Activated CD4-positive, alpha-beta T cell treated with anti-CD3 and anti-CD28 coated beads for 36 hours (primary cell): ENCODE measurements at regions of chr9 and their contacts with region 1.

Region 1: GRCh38 chr9:136109351-136110081 is 9.2 kb downstream of the TMEM250 start:
- DNase-seq: peak; percentile 97
- ATAC-seq: peak; percentile 88
- H3K4me3 Mint-ChIP-seq: peak overlapping the region; percentile 78
- H3K27ac Mint-ChIP-seq: peak overlapping the region; percentile 97
- H3K4me1 Mint-ChIP-seq: peaks cover 71% of the 10 kb centered on the region
- H3K27me3 Mint-ChIP-seq: no peaks in the 10 kb centered on the region

Region 2: DNA sequence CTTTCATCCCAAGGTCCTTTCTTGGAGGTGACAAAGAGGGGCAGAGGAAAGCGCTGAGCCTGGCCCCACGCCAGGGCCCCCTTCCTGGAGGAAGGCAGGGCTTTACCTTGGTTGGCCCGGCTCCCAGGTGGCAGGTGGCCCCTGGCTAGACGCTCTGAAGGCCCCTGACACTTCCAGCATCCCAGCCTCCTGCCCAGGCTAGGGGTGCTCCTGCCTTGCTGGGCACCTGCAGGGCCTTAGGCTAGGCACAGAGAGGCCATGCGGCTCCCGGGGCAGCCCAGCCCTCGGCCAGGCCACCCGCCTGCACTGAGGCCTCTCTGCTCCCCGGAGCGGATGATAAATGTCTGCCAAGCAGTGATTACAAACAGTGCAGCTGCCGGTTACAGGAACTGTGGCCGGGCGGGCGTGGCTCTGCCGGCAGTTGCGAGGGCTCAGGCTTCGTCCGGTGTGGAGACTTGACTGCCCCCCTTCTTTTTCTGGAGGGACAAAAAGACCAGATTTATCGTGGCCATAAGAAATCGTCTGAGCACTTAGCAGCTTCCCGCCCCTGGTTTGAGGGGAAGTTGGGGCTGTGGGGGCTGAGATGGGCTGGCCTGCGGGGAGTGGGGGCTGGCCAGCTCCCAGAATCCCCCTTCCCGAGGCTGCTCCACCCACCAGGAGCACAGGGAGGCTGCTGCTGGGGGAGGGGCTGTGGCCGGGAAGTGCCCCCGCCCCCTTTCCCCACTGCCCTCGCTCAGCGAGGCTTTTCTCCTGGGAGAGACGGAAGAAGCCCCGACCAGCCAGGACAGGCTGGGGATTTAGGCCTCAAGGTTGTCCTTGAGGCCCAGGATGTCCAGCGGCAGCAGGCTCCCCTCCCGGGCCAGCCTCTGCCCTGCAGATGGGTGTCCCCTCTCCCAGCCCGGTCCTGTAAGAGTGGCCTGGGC is 116.8 kb before region 1 on chr9:
- CTCF ChIA-PET with region 1: interaction called, 3 read pairs
- POLR2A ChIA-PET with region 1: no interaction called
- intact Hi-C with region 1: loop called in 1 of 2 experiments (anchors 5 kb)
- DNase-seq: peak; percentile 68
- ATAC-seq: peak; percentile 71
- H3K4me3 Mint-ChIP-seq: no peak overlapping the region
- H3K27ac Mint-ChIP-seq: no peak overlapping the region
- H3K4me1 Mint-ChIP-seq: peaks cover 17% of the 10 kb centered on the region
- H3K27me3 Mint-ChIP-seq: no peaks in the 10 kb centered on the region

Region 3: GRCh38 chr9:136093995-136094881 is 15.3 kb before region 1 on chr9:
- CTCF ChIA-PET with region 1: interaction called, 3 read pairs
- POLR2A ChIA-PET with region 1: interaction called, 4 read pairs
- intact Hi-C with region 1: loop called in 1 of 2 experiments (anchors 1 kb)
- DNase-seq: peak; percentile 79
- ATAC-seq: peak; percentile 74
- H3K4me3 Mint-ChIP-seq: peak overlapping the region; percentile 68
- H3K27ac Mint-ChIP-seq: peak overlapping the region; percentile 63
- H3K4me1 Mint-ChIP-seq: peaks cover 6% of the 10 kb centered on the region
- H3K27me3 Mint-ChIP-seq: peaks cover 5% of the 10 kb centered on the region

Region 4: GRCh38 chr9:136533775-136534157 is 424.2 kb after region 1 on chr9:
- CTCF ChIA-PET with region 1: no interaction called
- POLR2A ChIA-PET with region 1: no interaction called
- intact Hi-C with region 1: loop called in 1 of 2 experiments (anchors 5 kb)
- DNase-seq: peak; percentile 91
- ATAC-seq: peak; percentile 69
- H3K4me3 Mint-ChIP-seq: peak overlapping the region; percentile 59
- H3K27ac Mint-ChIP-seq: peak overlapping the region; percentile 82
- H3K4me1 Mint-ChIP-seq: peaks cover 60% of the 10 kb centered on the region
- H3K27me3 Mint-ChIP-seq: no peaks in the 10 kb centered on the region